Activated T-helper 1 cell treated with anti-CD3 and anti-CD28 coated beads, Interleukin-12 subunit alpha, Interleukin-12 subunit beta, Interleukin-2, Interleukin-4 antibody, amounts not matched to agents 30 ng/mL and 10 ng/mL and 1 ng/mL, durations not matched to agents 14 hours and 24 hours and 36 hours (primary cell): ENCODE measurements at regions of chr10 and their contacts with region 1.

Region 1: DNA sequence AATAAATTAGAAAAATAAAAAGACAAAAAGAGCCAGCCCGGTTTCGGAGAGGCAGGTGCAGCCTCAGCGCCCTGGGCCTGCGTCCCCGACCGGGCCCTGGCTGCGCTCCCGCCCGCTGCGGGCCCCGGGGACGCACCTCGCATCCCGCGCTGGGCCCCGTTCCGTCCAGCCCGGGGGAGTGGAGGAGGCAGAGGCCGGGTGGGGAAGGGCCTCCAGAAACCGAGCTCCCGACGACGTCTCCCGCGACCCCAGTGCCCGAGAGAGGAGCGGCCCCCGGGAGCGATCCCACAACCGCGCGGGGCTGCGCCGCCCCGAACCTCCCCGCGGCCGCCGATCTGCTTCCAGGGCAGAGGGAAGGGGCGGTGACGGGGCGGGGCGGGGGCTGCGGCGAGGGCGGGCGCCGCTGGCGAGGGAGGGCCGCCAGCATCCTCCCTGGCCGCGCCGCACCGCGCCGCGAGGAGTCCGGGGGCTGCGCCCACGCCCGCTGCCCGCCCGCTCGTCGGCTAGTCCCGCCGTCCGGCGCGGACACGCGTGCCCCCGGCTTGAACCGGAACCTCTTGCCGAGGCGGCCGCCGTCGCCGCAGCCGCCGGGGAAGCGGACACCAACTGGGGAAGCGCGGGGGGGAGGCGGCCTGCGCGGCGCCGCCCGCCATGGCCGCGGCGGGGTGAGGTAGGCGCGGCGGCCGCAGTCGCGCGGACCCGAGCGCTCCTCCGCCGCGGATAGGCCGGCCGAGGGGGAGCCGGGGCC is at the start of gene CCNY:
- DNase-seq: peak; percentile 69
- H3K4me3 Mint-ChIP-seq: peak within 1 kb of the TSS; percentile 93
- H3K27ac Mint-ChIP-seq: peak within 1 kb of the TSS; percentile 95
- H3K4me1 Mint-ChIP-seq: peaks cover 78% of the 10 kb centered on the region
- H3K27me3 Mint-ChIP-seq: no peaks in the 10 kb centered on the region
- total RNA-seq, gene CCNY: 56.5 and 71.0 TPM in 2 replicates

Region 2: GRCh38 chr10:34121781-34122628 is 1214.3 kb before region 1 on chr10:
- intact Hi-C with region 1: loop called (anchors 5 kb)
- DNase-seq: peak; percentile 13
- H3K4me3 Mint-ChIP-seq: peak overlapping the region; percentile 17
- H3K27ac Mint-ChIP-seq: peak overlapping the region; percentile 86
- H3K4me1 Mint-ChIP-seq: peaks cover 27% of the 10 kb centered on the region
- H3K27me3 Mint-ChIP-seq: no peaks in the 10 kb centered on the region

Region 3: DNA sequence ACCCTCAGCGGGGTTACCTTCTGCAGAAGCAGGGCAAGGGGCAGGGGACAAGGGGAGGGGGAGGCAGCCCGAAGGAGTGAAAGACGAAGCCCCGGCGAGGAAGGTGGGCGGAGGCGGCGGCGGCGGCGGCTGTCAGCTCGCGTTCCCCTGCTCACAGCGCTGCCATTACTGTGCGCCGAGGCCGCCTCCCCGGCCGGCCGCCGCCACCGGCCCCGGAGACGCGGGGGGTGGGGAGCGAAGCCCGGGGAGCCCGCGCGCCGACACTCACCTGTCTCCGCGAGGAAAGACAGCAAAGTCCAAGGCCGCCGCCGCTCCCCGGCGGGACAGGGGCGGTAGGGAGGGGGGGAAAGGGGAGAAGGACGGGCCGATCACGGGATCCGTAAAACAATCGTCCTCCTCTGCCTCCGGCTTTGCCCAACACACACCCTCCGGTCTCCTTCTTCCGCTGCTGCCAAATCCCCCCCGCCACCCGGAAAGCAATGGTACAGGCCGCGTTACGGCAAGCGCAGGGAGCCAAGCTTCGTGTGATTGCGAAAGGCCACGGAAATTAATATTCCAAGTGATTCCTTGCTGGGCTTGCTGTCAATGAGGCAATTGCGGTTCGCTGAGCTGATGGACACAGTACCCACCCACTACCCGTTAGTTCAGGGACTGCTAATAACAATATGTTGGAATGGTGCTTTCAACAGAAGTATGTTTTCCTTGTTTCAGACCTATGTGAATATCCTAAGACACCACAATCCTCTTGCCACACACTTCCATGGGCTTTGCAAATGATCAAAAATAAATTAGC is 245.9 kb before region 1 on chr10 and contains the start of gene CUL2:
- intact Hi-C with region 1: loop called (anchors 1 kb)
- DNase-seq: peak; percentile 90
- H3K4me3 Mint-ChIP-seq: peak within 1 kb of the TSS; percentile 98
- H3K27ac Mint-ChIP-seq: peak within 1 kb of the TSS; percentile 99
- H3K4me1 Mint-ChIP-seq: peaks cover 38% of the 10 kb centered on the region
- H3K27me3 Mint-ChIP-seq: peaks cover 9% of the 10 kb centered on the region
- total RNA-seq, gene CUL2: 49.8 and 50.5 TPM in 2 replicates

Region 4: GRCh38 chr10:35153716-35154479 is 182.4 kb before region 1 on chr10:
- intact Hi-C with region 1: loop called (anchors 2 kb)
- DNase-seq: no peak
- H3K4me3 Mint-ChIP-seq: no peak overlapping the region
- H3K27ac Mint-ChIP-seq: no peak overlapping the region
- H3K4me1 Mint-ChIP-seq: peaks cover 44% of the 10 kb centered on the region
- H3K27me3 Mint-ChIP-seq: no peaks in the 10 kb centered on the region

Region 5: DNA sequence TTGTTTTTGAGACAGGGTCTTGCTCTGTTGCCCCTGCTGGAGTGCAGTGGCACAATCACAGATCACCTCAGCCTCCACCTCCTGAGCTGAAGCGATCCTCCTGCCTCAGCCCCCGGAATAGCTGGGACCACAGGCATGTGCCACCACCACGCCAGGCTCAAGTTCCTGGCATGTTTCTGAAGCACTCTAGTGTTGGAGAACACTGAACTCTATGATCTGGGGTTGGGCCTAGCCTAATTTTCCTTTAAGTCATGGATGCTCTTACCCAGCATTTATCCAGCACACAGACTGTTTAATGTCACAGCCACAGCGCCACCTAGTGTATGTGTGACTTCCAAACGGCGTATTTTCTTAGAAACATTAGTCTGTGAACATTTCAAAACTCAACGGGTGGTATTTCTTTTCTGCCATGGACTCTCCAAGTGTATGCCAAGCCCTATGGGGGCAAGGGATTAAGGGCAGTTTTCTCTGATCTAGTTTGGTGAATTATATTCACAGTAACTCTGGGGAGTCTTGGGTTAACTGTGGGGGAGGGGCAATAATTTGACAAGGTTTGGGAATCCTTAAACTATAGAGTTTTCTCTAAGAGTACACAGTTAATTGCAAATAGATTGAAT is 117.8 kb before region 1 on chr10:
- intact Hi-C with region 1: loop called (anchors 1 kb)
- DNase-seq: peak; percentile 73
- H3K4me3 Mint-ChIP-seq: peak overlapping the region; percentile 74
- H3K27ac Mint-ChIP-seq: peak overlapping the region; percentile 95
- H3K4me1 Mint-ChIP-seq: peaks cover 61% of the 10 kb centered on the region
- H3K27me3 Mint-ChIP-seq: no peaks in the 10 kb centered on the region

Region 6: GRCh38 chr10:35289198-35289597 is 47.1 kb before region 1 on chr10:
- intact Hi-C with region 1: no loop called
- DNase-seq: no peak
- H3K4me3 Mint-ChIP-seq: no peak overlapping the region
- H3K27ac Mint-ChIP-seq: no peak overlapping the region
- H3K4me1 Mint-ChIP-seq: no peaks in the 10 kb centered on the region
- H3K27me3 Mint-ChIP-seq: peaks cover 4% of the 10 kb centered on the region

Region 7: GRCh38 chr10:35442028-35442427 is 105.8 kb after region 1 on chr10:
- intact Hi-C with region 1: loop called (anchors 1 kb)
- DNase-seq: no peak
- H3K4me3 Mint-ChIP-seq: no peak overlapping the region
- H3K27ac Mint-ChIP-seq: peak overlapping the region; percentile 79
- H3K4me1 Mint-ChIP-seq: peaks cover 36% of the 10 kb centered on the region
- H3K27me3 Mint-ChIP-seq: peaks cover 2% of the 10 kb centered on the region

Region 8: DNA sequence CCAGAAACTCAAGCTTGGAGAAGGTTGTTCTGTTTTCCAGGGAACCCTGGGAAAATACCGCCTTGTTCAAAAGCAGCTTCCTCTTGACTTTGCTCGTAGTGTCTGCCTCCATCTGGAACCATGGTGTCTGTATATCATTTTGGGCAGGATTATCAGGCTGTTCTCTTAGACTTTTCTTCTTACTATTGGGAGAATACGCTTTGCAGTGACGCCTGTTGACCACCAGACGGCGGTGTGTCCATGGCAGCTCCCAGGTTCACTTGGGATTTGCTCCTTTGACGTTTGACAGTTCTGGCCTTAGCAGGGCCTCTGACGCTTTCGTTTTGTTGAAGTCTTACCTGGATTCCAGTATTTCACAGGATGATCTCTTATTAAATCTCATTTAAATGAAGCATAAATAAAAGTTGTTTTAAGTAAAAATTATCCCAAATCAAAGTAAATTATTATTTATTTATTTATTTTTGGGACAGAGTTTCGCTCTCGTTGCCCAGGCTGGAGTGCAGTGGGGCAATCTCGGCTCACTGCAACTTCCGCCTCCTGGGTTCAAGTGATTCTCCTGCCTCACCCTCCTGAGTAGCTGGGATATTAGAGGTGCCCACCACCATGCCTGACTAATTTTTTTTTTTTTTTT is 227.1 kb after region 1 on chr10:
- intact Hi-C with region 1: loop called (anchors 5 kb)
- DNase-seq: peak; percentile 11
- H3K4me3 Mint-ChIP-seq: no peak overlapping the region
- H3K27ac Mint-ChIP-seq: peak overlapping the region; percentile 55
- H3K4me1 Mint-ChIP-seq: no peaks in the 10 kb centered on the region
- H3K27me3 Mint-ChIP-seq: no peaks in the 10 kb centered on the region